Right lobe of liver (tissue), 6 donors: ENCODE measurements at regions of chrX and their contacts with region 1.

Region 1: DNA sequence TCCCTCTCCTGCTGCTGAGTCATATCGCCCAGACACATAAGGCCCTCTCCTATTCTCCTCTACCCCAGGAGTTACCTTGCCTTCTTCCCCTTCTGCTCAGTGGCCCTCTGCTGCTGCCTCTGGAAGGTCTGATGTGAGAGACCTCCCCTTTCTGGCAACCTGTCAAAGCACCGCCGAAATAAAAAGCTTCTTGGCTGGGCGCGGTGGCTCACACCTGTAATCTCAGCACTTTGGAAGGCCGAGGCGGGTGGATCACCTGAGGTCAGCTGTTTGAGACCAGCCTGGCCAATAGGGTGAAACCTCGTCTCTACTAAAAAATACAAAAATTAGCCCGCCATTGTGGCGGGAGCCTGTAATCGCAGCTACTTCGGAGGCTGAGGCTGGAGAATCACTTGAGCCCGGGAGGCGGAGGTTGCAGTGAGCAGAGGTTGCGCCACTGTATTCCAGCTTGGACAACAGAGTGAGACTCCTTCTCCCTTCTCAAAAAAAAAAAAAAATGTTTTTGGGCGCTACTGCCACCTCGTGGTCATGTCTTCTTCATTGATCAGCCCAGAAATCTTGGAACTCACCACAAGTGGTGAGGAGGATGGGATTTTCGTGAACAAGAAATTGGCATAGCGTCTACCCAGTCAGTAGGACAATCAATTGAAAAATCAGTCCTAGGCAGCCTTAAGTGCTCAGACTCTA is 8.6 kb upstream of the ZXDA start:
- DNase-seq: no peak
- ATAC-seq: peak; percentile 76 to 91 (median 84)
- H3K4me3 ChIP-seq: no peak overlapping the region
- H3K27ac ChIP-seq: no peak overlapping the region
- H3K4me1 ChIP-seq: no peaks in the 10 kb centered on the region
- H3K27me3 ChIP-seq: no peaks in the 10 kb centered on the region
- CTCF ChIP-seq: peak; percentile 32 to 53 (median 52)
- POLR2A ChIP-seq: no peak

Region 2: DNA sequence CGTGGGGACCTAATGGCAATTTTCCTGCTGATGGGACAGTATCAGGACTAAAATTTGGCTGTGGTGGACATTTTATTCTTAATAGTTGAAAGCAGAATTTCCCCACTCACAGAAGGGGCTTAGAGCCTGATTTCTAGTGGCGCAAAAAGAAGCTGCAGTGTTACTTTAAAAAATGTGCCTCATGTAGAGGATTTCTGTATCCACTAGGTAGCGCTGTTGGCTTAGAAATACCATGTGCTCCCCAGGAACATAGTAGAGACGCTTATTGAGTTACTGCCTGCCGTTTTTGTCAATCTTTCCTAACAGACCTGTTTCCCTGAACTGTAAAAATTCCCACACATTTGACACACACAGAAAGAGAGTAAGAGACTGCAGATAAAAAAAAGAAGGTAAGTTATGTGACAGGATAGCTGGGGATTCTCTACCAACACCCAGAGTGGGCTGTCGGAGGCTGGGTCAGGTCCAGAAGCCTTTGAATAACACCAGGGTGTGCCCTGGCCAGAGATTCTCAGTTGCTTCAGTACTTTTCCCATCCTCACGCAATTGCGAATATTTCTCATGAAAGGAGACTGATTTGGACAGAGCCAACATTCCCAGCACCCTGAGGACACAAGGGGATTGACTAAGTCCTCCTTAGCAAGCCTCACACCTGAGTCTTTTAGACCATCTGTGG is 97.1 kb before region 1 on chrX:
- intact Hi-C with region 1: loop called in 1 of 2 experiments (anchors 5 kb)
- DNase-seq: peak in 1 of 3 donors; percentile 40
- ATAC-seq: peak; percentile 90 to 98 (median 94)
- H3K4me3 ChIP-seq: peak overlapping the region in 2 of 3 donors; percentile 2
- H3K27ac ChIP-seq: no peak overlapping the region
- H3K4me1 ChIP-seq: no peaks in the 10 kb centered on the region
- H3K27me3 ChIP-seq: no peaks in the 10 kb centered on the region
- CTCF ChIP-seq: peak; percentile 64 to 93 (median 69)
- POLR2A ChIP-seq: no peak

Region 3: DNA sequence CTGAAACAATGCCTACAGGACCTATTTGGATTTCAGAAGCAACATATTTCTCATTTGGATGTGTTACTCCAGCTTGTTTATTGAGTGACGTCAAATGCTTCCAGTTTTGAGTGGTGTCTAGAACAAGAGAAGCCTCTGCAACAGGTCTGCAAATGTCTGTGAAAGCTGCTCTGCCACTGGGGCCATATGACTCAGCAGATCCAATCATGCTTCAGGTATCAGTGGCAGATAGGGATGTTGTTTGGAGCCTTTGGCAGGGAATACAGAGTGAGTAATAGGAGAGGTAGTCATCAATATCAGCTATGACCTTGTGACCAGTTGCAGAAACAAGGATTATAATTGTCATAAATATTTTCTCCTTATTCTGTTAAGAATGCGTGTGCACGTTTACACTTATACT is 132.5 kb after region 1 on chrX:
- intact Hi-C with region 1: no loop called
- DNase-seq: no peak
- ATAC-seq: peak in 1 of 4 donors; percentile 50
- H3K4me3 ChIP-seq: no peak overlapping the region
- H3K27ac ChIP-seq: no peak overlapping the region
- H3K4me1 ChIP-seq: no peaks in the 10 kb centered on the region
- H3K27me3 ChIP-seq: no peaks in the 10 kb centered on the region
- CTCF ChIP-seq: no peak
- POLR2A ChIP-seq: no peak